OCI-LY7 (cell line): ENCODE measurements at regions of chr4 and their contacts with region 1.

Region 1: GRCh38 chr4:142414336-142414990 is 431.6 kb downstream of the INPP4B start:
- DNase-seq: no peak
- H3K4me3 ChIP-seq: no peak overlapping the region
- H3K27ac ChIP-seq: no peak overlapping the region
- H3K4me1 ChIP-seq: no peaks in the 10 kb centered on the region
- CTCF ChIP-seq: no peak

Region 2: DNA sequence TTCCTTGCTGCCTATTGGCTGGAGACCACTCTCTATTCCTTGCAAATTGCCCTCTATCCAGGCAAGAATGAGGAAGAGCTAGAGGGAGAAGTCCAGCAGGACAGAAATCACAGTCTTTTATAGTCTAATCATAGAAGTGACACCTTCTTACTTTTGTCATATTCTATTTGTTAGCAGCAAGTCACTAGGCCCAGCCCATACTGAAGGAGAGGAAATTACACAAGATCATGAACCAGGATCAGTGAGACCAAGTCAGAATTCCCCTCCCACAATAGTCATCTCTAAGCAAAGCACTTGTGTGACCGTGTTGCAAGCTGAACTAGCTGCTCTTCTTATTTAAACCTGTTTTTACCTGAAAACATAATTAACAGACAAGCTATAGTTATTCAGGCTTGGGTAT is 114.0 kb after region 1 on chr4:
- CTCF ChIA-PET with region 1: no interaction called
- POLR2A ChIA-PET with region 1: no interaction called
- intact Hi-C with region 1: no loop called
- DNase-seq: no peak
- H3K4me3 ChIP-seq: no peak overlapping the region
- H3K27ac ChIP-seq: no peak overlapping the region
- H3K4me1 ChIP-seq: no peaks in the 10 kb centered on the region
- CTCF ChIP-seq: no peak

Region 3: GRCh38 chr4:142539796-142540482 is 125.5 kb after region 1 on chr4:
- CTCF ChIA-PET with region 1: no interaction called
- POLR2A ChIA-PET with region 1: no interaction called
- intact Hi-C with region 1: no loop called
- DNase-seq: no peak
- H3K4me3 ChIP-seq: no peak overlapping the region
- H3K27ac ChIP-seq: no peak overlapping the region
- H3K4me1 ChIP-seq: no peaks in the 10 kb centered on the region
- CTCF ChIP-seq: no peak

Region 4: GRCh38 chr4:142917678-142918077 is 503.2 kb after region 1 on chr4:
- CTCF ChIA-PET with region 1: no interaction called
- POLR2A ChIA-PET with region 1: interaction called, 10 read pairs
- intact Hi-C with region 1: no loop called
- DNase-seq: no peak
- H3K4me3 ChIP-seq: no peak overlapping the region
- H3K27ac ChIP-seq: no peak overlapping the region
- H3K4me1 ChIP-seq: no peaks in the 10 kb centered on the region
- CTCF ChIP-seq: no peak